ENCODE measurements at regions of chr1 and their contacts with region 1.

Region 1: GRCh38 chr1:71049951-71050598 is 2.5 kb upstream of the PTGER3 start:
- DNase-seq: no peak
- H3K4me3 ChIP-seq: no peak overlapping the region
- H3K27ac ChIP-seq: no peak overlapping the region
- H3K4me1 ChIP-seq: peaks cover 16 to 23% (median 20%) of the 10 kb centered on the region in 4 donors
- H3K27me3 ChIP-seq: peaks cover 5 to 34% (median 7%) of the 10 kb centered on the region in 4 donors
- CTCF ChIP-seq: peak; percentile 66 to 85 (median 77)
- EP300 ChIP-seq: no peak
- POLR2A ChIP-seq: no peak

Region 2: GRCh38 chr1:70528590-70529333 is 521.3 kb before region 1 on chr1:
- intact Hi-C with region 1: loop called (anchors 5 kb)
- DNase-seq: no peak
- H3K4me3 ChIP-seq: no peak overlapping the region
- H3K27ac ChIP-seq: no peak overlapping the region
- H3K4me1 ChIP-seq: peaks cover 0 to 8% (median 0%) of the 10 kb centered on the region in 4 donors
- H3K27me3 ChIP-seq: no peaks in the 10 kb centered on the region
- CTCF ChIP-seq: peak in 2 of 3 experiments; percentile 32 to 60
- EP300 ChIP-seq: no peak
- POLR2A ChIP-seq: no peak

Region 3: DNA sequence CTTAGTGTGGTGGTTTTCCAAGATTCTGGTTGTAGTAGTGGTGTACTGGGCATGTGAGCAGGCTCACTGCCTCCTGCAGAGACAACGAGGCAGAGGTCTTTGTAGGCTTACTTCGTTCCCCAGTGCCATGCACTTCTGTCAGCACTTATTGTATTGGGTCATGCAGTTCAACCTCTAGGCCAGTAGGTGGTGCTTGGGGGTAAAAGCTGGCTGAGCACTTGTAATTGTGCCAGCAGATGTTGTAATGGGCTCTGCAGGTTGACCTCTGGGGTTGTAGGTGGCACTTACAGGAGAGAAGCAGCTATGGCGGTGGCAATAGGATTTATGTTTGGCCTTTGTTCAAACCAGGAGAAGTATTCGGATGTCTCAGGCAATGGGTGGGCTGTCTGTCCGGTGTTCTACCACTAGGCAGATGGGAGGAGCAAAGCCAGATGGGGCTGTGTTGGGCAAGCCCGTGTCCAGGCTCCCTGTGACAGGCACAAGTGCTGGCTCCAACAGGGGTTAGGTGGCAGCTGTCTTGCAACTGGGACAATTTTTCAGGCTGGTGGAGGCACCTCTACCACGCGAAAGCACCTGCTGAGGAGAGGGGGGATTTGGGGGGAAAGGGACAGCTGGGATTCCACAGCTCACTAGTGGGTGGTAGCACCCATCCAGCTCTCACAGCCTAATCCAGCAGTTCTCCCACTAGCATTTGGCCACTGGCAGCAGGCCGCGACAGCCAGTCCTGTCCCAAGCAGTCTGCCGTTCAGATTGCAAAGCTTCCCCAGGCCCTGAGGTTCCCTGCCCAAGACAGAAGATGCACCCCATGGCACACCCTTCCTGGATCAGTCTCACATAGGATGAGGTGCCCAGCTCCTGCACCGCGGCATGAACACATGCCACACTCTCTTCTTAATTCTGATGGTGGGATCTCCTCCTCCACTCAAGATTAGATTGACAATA is 364.5 kb before region 1 on chr1:
- intact Hi-C with region 1: loop called (anchors 2 kb)
- DNase-seq: no peak
- H3K4me3 ChIP-seq: no peak overlapping the region
- H3K27ac ChIP-seq: no peak overlapping the region
- H3K4me1 ChIP-seq: no peaks in the 10 kb centered on the region
- H3K27me3 ChIP-seq: peaks cover 0 to under 1% (median 0%) of the 10 kb centered on the region in 4 donors
- CTCF ChIP-seq: peak; percentile 76 to 93 (median 76)
- EP300 ChIP-seq: no peak
- POLR2A ChIP-seq: no peak

Region 4: DNA sequence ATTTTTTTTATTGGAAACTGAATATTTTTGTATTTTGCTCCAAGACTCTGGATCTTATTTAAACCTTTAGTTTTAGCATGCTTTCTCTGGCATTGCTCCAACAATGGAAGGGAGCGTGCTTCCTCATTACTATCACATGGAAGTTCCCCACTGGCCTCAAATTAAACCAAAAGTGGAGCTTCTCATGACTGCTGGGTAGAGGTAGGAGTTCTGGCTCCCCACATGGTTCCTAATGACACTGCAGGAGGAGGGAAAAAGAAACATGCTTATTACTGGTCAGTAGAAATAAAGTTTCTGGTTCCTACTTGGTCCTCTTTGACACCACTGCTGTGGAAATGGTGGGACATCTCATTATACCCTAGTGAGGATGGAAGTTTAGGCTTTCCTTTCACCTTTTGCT is 312.9 kb before region 1 on chr1:
- intact Hi-C with region 1: no loop called
- DNase-seq: no peak
- H3K4me3 ChIP-seq: no peak overlapping the region
- H3K27ac ChIP-seq: no peak overlapping the region
- H3K4me1 ChIP-seq: no peaks in the 10 kb centered on the region
- H3K27me3 ChIP-seq: no peaks in the 10 kb centered on the region
- CTCF ChIP-seq: no peak
- EP300 ChIP-seq: no peak
- POLR2A ChIP-seq: no peak

Region 5: DNA sequence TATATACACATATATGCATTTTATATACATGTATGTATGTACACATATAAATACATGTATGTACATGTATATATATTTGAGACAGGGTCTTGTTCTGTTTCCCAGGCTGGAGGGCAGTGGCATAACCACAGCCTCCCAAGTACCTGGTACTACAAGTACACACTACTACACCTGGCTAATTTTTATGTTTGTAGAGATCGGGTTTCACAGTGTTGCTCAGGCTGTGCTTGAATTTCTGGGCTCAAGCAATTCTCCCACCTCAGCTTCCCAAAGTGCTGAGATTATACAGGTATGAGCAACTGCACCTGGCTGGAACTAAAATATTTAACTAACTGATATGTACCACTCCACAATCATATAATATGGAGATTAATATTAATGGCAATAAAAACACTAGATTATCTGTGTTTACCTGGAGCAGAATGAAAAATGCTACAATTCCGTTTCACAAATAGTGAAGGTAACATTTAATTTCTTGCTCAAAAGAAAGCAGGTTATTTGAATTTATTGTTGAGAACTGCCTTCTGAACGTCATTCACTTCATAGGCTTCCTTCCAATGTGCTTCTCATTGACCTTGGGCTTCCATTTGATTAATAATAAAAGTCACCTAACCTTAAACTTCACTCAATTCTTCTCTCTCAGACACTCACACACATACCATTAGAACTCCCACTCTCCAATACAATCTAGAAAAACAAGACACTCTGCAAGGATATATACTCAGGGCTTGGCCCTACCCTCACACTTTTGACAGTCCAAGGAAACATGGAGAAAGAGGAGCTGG is 59.4 kb before region 1 on chr1:
- intact Hi-C with region 1: no loop called
- DNase-seq: no peak
- H3K4me3 ChIP-seq: no peak overlapping the region
- H3K27ac ChIP-seq: no peak overlapping the region
- H3K4me1 ChIP-seq: no peaks in the 10 kb centered on the region
- H3K27me3 ChIP-seq: no peaks in the 10 kb centered on the region
- CTCF ChIP-seq: no peak
- EP300 ChIP-seq: no peak
- POLR2A ChIP-seq: no peak

Region 6: DNA sequence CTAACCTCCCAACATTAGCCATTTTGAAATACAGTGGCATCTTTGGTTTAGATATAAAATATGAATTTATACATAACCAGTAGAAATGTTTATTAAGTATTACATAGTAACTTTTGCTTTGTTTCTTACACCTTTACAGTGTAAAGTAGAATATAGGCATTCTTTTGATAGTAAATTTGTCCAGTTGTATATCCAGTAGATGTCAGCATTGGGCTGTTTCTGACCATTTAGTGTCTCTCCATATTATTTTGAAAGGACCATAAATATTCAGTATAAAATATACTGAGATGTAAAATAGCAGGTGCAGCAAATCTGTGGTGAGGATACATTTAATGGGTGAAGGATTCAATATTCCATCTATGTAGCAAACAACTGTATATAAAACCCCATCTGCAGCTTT is 146.6 kb after region 1 on chr1:
- intact Hi-C with region 1: no loop called
- DNase-seq: no peak
- H3K4me3 ChIP-seq: no peak overlapping the region
- H3K27ac ChIP-seq: no peak overlapping the region
- H3K4me1 ChIP-seq: peaks cover 0 to 10% (median 3%) of the 10 kb centered on the region in 4 donors
- H3K27me3 ChIP-seq: no peaks in the 10 kb centered on the region
- CTCF ChIP-seq: peak; percentile 21 to 47 (median 37)
- EP300 ChIP-seq: no peak
- POLR2A ChIP-seq: no peak

Region 7: DNA sequence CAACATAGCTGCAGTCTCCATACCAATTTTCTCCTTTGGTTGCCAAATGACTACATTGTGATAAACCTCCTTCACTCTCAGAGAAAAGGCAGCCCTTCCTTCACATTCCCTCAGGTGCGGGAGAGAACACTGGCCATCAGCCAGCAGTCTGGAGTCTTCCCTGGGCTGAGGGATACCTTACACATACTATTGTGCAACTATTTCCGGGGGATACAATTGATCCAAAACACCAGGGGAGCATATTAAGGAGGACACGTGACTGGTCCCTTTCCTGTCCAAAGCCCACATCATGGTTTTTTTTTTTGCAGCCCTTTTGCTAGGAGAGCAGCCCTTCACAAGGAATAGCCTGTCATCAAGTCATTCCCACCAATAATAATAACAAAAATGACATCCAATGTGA is 202.8 kb after region 1 on chr1:
- intact Hi-C with region 1: no loop called
- DNase-seq: no peak
- H3K4me3 ChIP-seq: no peak overlapping the region
- H3K27ac ChIP-seq: no peak overlapping the region
- H3K4me1 ChIP-seq: no peaks in the 10 kb centered on the region
- H3K27me3 ChIP-seq: no peaks in the 10 kb centered on the region
- CTCF ChIP-seq: no peak
- EP300 ChIP-seq: no peak
- POLR2A ChIP-seq: no peak